HCT116 (cell line): ENCODE measurements at regions of chr20 and their contacts with region 1.

Region 1: GRCh38 chr20:50120897-50121693 is 8.1 kb upstream of the UBE2V1 start:
- DNase-seq: peak; percentile 56
- ATAC-seq: peak; percentile 72
- H3K4me3 ChIP-seq: no peak overlapping the region
- H3K27ac ChIP-seq: no peak overlapping the region
- H3K4me1 ChIP-seq: peaks cover 3 to 13% of the 10 kb centered on the region in 2 experiments; a peak in 1 of 4 replicates
- H3K27me3 ChIP-seq: no peaks in the 10 kb centered on the region
- CTCF ChIP-seq: peak; percentile 90 to 96 (median 95)
- POLR2A ChIP-seq: no peak
- RAD21 ChIP-seq: peak; percentile 97

Region 2: DNA sequence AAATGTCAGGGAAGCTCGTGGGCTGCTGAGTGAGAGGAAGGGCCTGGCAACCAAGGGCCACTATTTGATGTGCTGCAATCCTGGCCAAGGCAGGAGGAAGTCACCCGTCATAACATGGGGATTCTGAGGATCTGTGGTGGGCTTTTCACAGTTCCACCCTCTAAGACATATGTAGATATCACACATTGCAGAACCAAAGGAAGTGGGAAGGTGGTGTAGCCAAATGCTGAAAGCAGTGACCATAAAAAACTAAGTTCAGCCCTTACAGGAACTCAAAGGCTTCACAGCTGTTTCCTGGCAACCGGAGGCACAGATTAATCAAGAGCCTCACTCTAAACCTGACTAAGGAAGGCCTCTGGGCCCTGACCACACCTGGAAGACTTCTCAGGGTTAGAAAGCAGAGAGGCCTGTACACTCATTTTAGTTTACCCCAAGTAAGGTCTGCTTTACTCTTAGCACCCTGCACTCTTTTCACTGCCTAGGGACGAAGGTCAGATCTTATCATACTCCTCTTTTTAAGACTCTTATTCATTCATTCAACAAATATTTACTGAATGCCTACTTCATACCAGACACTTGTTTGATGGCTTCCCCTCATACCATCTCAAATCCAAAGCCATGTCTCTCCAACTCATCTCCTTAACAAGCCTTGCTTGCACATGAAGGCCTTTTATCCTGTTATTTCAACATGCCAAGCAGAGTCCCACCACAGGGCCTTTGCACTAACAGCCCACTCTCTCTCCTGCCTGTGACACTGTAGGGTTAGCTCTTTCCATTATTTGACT is 10.8 kb before region 1 on chr20:
- CTCF ChIA-PET with region 1: interaction called, 10 read pairs
- POLR2A ChIA-PET with region 1: interaction called, 7 read pairs
- RAD21 ChIA-PET with region 1: no interaction called
- intact Hi-C with region 1: no loop called
- DNase-seq: no peak
- ATAC-seq: no peak
- H3K4me3 ChIP-seq: 0 out of 4 replicates have a peak overlapping the region, but pooled peaks of 1 of the 2 experiments have one; percentile 87
- H3K27ac ChIP-seq: 0 out of 2 replicates have a peak overlapping the region, but pooled peaks have one; percentile 2
- H3K4me1 ChIP-seq: peaks cover 65 to 83% of the 10 kb centered on the region in 2 experiments
- H3K27me3 ChIP-seq: no peaks in the 10 kb centered on the region
- CTCF ChIP-seq: no peak
- POLR2A ChIP-seq: no peak
- RAD21 ChIP-seq: no peak

Region 3: DNA sequence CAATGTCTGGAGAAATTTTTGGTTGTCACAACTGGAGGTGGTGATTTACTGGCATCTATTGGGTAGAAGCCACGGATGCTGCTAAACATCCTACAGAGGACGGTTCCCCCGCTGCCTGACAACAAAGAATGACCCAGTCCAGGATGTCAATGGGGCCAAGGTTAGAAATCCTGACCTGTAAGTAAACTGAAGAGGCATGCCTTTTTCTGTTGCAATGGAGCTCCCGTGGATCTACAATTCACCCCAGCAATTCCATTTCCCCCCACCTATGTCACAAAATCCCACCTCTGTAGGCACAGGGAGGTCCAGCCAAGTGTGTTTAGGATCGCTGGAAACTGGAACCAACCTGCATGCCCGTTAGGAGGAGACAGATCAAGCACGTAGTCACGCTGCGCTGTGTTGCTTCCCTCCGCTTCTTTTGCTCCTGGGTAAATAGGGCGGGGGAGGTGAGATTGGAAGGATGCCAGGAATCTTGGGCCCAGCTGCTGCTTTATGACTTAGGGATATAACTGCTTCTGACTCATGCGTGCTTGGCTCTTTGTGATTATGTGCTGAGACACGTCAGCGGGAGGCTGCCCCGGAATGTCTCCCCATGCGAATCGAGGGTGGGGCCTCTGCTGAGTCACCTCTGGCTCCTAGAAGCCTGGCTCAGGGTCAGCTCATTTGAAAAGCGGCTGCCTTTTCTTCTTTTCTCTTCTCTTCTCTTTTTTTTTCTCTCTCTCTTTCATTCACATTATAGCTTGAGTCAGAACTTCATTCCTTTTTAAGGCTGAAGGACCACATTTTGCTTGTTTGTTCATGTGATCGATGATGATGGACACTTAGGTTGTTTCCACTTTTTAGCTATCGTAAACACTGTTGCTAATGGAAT is 44.8 kb after region 1 on chr20:
- CTCF ChIA-PET with region 1: interaction called, 78 read pairs
- POLR2A ChIA-PET with region 1: interaction called, 9 read pairs
- RAD21 ChIA-PET with region 1: interaction called, 15 to 19 read pairs
- intact Hi-C with region 1: loop called (anchors 1 kb)
- DNase-seq: peak; percentile 100
- ATAC-seq: peak; percentile 90
- H3K4me3 ChIP-seq: peak overlapping the region; percentile 41 to 54
- H3K27ac ChIP-seq: peak overlapping the region; percentile 83
- H3K4me1 ChIP-seq: peaks cover 40 to 61% of the 10 kb centered on the region in 2 experiments
- H3K27me3 ChIP-seq: no peaks in the 10 kb centered on the region
- CTCF ChIP-seq: no peak
- POLR2A ChIP-seq: peak; percentile 31
- RAD21 ChIP-seq: peak; percentile 34; the same call in 1 of the 2 replicates

Region 4: GRCh38 chr20:50172347-50173013 is 51.4 kb after region 1 on chr20:
- CTCF ChIA-PET with region 1: interaction called, 78 read pairs
- POLR2A ChIA-PET with region 1: interaction called, 4 read pairs
- RAD21 ChIA-PET with region 1: interaction called, 15 to 19 read pairs
- intact Hi-C with region 1: loop called (anchors 1 kb)
- DNase-seq: no peak
- ATAC-seq: peak; percentile 96
- H3K4me3 ChIP-seq: peak overlapping the region; percentile 64 to 73
- H3K27ac ChIP-seq: peak overlapping the region; percentile 78
- H3K4me1 ChIP-seq: peaks cover 16 to 33% of the 10 kb centered on the region in 2 experiments
- H3K27me3 ChIP-seq: no peaks in the 10 kb centered on the region
- CTCF ChIP-seq: no peak
- POLR2A ChIP-seq: peak; percentile 26
- RAD21 ChIP-seq: no peak

Region 5: GRCh38 chr20:50179507-50180016 is 58.5 kb after region 1 on chr20:
- CTCF ChIA-PET with region 1: interaction called, 59 read pairs
- POLR2A ChIA-PET with region 1: interaction called, 3 read pairs
- RAD21 ChIA-PET with region 1: interaction called, 9 to 10 read pairs
- intact Hi-C with region 1: loop called (anchors 1 kb)
- DNase-seq: no peak
- ATAC-seq: peak; percentile 67
- H3K4me3 ChIP-seq: no peak overlapping the region
- H3K27ac ChIP-seq: no peak overlapping the region
- H3K4me1 ChIP-seq: peaks cover 0 to 7% of the 10 kb centered on the region in 2 experiments; a peak in 2 of 4 replicates
- H3K27me3 ChIP-seq: no peaks in the 10 kb centered on the region
- CTCF ChIP-seq: no peak
- POLR2A ChIP-seq: no peak
- RAD21 ChIP-seq: no peak

Region 6: GRCh38 chr20:50460460-50461267 is 339.6 kb after region 1 on chr20:
- CTCF ChIA-PET with region 1: interaction called, 6 read pairs
- POLR2A ChIA-PET with region 1: no interaction called
- RAD21 ChIA-PET with region 1: no interaction called
- intact Hi-C with region 1: loop called (anchors 5 kb)
- DNase-seq: peak; percentile 69
- ATAC-seq: peak; percentile 92
- H3K4me3 ChIP-seq: no peak overlapping the region
- H3K27ac ChIP-seq: peak overlapping the region; percentile 10; the same call in 1 of the 2 replicates
- H3K4me1 ChIP-seq: peaks cover 4 to 25% of the 10 kb centered on the region in 2 experiments; a peak in 3 of 4 replicates
- H3K27me3 ChIP-seq: no peaks in the 10 kb centered on the region
- CTCF ChIP-seq: peak; percentile 92 to 93 (median 92)
- POLR2A ChIP-seq: no peak
- RAD21 ChIP-seq: peak; percentile 99